Sigmoid colon (tissue), 7 donors: ENCODE measurements at regions of chr10 and their contacts with region 1.

Region 1: DNA sequence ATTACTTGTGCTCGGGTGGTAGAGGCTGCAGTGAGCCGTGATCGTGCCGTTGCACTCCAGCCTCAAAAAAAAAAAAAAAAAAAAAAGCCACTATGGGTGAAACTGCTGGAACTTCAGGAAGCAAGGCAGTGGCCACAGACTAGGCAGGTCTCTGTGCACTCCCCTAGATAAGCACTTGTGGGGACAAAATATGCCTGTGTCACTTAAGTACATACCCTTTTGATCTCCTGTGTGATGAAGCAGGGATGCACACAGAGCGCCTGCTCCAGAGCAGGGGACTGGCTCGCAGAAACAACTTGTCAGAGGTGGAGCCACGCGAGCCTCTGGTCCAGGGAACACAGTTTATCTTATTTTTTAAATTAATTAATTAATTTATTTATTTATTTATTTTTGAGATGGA is 42.9 kb upstream of the PSAP start:
- DNase-seq: no peak
- H3K4me3 ChIP-seq: no peak overlapping the region
- H3K27ac ChIP-seq: no peak overlapping the region
- H3K4me1 ChIP-seq: peaks cover 0 to 14% (median 10%) of the 10 kb centered on the region in 4 donors
- H3K27me3 ChIP-seq: no peaks in the 10 kb centered on the region
- CTCF ChIP-seq: no peak
- EP300 ChIP-seq: no peak
- POLR2A ChIP-seq: no peak

Region 2: GRCh38 chr10:71378336-71379117 is 515.4 kb before region 1 on chr10:
- intact Hi-C with region 1: loop called (anchors 5 kb)
- DNase-seq: no peak
- H3K4me3 ChIP-seq: no peak overlapping the region
- H3K27ac ChIP-seq: peak overlapping the region in 3 of 4 donors; percentile 82 to 88 (median 87)
- H3K4me1 ChIP-seq: peaks cover 0 to 10% (median 8%) of the 10 kb centered on the region in 4 donors
- H3K27me3 ChIP-seq: no peaks in the 10 kb centered on the region
- CTCF ChIP-seq: no peak
- EP300 ChIP-seq: no peak
- POLR2A ChIP-seq: no peak

Region 3: DNA sequence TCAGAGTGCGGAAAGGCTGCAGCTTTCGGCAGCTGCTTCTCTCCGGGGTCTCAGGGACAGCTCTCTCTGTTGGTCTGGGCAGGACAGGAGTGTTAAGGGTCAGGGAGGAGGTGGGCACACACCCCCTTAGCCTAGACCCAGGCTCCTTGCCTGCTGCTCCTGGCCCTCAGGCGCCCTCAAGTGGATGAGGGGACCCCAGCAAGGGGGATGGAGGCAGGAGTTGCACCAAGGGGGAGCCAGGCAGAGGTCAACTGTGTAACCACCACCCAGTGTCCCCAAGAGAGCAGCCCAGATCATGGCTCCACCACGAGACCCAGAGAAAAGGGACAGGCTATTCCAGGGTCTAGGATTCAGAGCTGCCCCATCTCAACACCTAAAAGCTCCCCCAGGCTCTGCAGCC is 167.6 kb after region 1 on chr10:
- intact Hi-C with region 1: no loop called
- DNase-seq: no peak
- H3K4me3 ChIP-seq: no peak overlapping the region
- H3K27ac ChIP-seq: no peak overlapping the region
- H3K4me1 ChIP-seq: no peaks in the 10 kb centered on the region
- H3K27me3 ChIP-seq: no peaks in the 10 kb centered on the region
- CTCF ChIP-seq: no peak
- EP300 ChIP-seq: no peak
- POLR2A ChIP-seq: no peak